ENCODE measurements at regions of chr1 and their contacts with region 1.

Region 1: GRCh38 chr1:170586321-170587252 is 54.6 kb downstream of the GORAB start:
- DNase-seq: no peak
- H3K4me3 Mint-ChIP-seq: no peak overlapping the region
- H3K27ac Mint-ChIP-seq: no peak overlapping the region
- H3K4me1 Mint-ChIP-seq: no peaks in the 10 kb centered on the region
- H3K27me3 Mint-ChIP-seq: no peaks in the 10 kb centered on the region
- CTCF ChIP-seq: no peak

Region 2: DNA sequence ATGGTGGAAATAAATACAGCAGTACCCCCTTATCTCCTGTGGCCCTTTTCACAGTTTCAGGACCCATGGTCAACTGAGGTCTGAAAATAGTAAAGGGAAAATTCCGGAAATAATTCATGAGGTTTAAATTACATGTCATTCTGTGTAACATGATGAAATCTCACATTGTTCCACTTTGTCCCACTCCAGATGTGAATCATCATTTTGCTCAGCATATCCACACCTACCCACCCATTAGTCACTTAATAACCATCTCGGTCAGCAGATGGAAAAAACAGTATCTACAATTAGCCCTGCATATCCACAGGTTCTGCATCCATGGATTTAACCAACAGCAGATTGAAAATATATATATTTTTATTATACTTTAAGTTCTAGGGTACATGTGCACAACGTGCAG is 141.5 kb before region 1 on chr1:
- CTCF ChIA-PET with region 1: no interaction called
- POLR2A ChIA-PET with region 1: no interaction called
- intact Hi-C with region 1: no loop called
- DNase-seq: peak; percentile 57
- H3K4me3 Mint-ChIP-seq: no peak overlapping the region
- H3K27ac Mint-ChIP-seq: peak overlapping the region; percentile 47
- H3K4me1 Mint-ChIP-seq: peaks cover 13% of the 10 kb centered on the region
- H3K27me3 Mint-ChIP-seq: no peaks in the 10 kb centered on the region
- CTCF ChIP-seq: no peak

Region 3: GRCh38 chr1:170545476-170545875 is 41.1 kb before region 1 on chr1:
- CTCF ChIA-PET with region 1: no interaction called
- POLR2A ChIA-PET with region 1: no interaction called
- intact Hi-C with region 1: no loop called
- DNase-seq: peak; percentile 53
- H3K4me3 Mint-ChIP-seq: no peak overlapping the region
- H3K27ac Mint-ChIP-seq: peak overlapping the region; percentile 80
- H3K4me1 Mint-ChIP-seq: peaks cover 12% of the 10 kb centered on the region
- H3K27me3 Mint-ChIP-seq: no peaks in the 10 kb centered on the region
- CTCF ChIP-seq: no peak

Region 4: GRCh38 chr1:170776777-170777176 is 190.2 kb after region 1 on chr1:
- CTCF ChIA-PET with region 1: no interaction called
- POLR2A ChIA-PET with region 1: no interaction called
- intact Hi-C with region 1: loop called (anchors 10 kb)
- DNase-seq: no peak
- H3K4me3 Mint-ChIP-seq: no peak overlapping the region
- H3K27ac Mint-ChIP-seq: no peak overlapping the region
- H3K4me1 Mint-ChIP-seq: no peaks in the 10 kb centered on the region
- H3K27me3 Mint-ChIP-seq: no peaks in the 10 kb centered on the region
- CTCF ChIP-seq: no peak